Activated CD4-positive, alpha-beta memory T cell treated with anti-CD3 and anti-CD28 coated beads for 36 hours (primary cell): ENCODE measurements at regions of chr3 and their contacts with region 1.

Region 1: GRCh38 chr3:136919799-136920580 is 37.8 kb upstream of the IL20RB start:
- DNase-seq: no peak
- H3K4me3 Mint-ChIP-seq: no peak overlapping the region
- H3K27ac Mint-ChIP-seq: peak overlapping the region; percentile 68
- H3K4me1 Mint-ChIP-seq: peaks cover 78% of the 10 kb centered on the region
- H3K27me3 Mint-ChIP-seq: no peaks in the 10 kb centered on the region

Region 2: GRCh38 chr3:136899622-136900158 is 20.3 kb before region 1 on chr3:
- CTCF ChIA-PET with region 1: no interaction called
- POLR2A ChIA-PET with region 1: no interaction called
- intact Hi-C with region 1: loop called (anchors 1 kb)
- DNase-seq: no peak
- H3K4me3 Mint-ChIP-seq: peak overlapping the region; percentile 1
- H3K27ac Mint-ChIP-seq: peak overlapping the region; percentile 69
- H3K4me1 Mint-ChIP-seq: peaks cover 59% of the 10 kb centered on the region
- H3K27me3 Mint-ChIP-seq: no peaks in the 10 kb centered on the region

Region 3: GRCh38 chr3:137020315-137020714 is 100.3 kb after region 1 on chr3:
- CTCF ChIA-PET with region 1: no interaction called
- POLR2A ChIA-PET with region 1: no interaction called
- intact Hi-C with region 1: no loop called
- DNase-seq: no peak
- H3K4me3 Mint-ChIP-seq: no peak overlapping the region
- H3K27ac Mint-ChIP-seq: no peak overlapping the region
- H3K4me1 Mint-ChIP-seq: no peaks in the 10 kb centered on the region
- H3K27me3 Mint-ChIP-seq: no peaks in the 10 kb centered on the region